ENCODE measurements at regions of chr2 and their contacts with region 1.

Region 1: GRCh38 chr2:174593574-174594203 is 3.9 kb downstream of the WIPF1 start:
- DNase-seq: peak; percentile 69
- H3K4me3 Mint-ChIP-seq: peak overlapping the region; percentile 86
- H3K27ac Mint-ChIP-seq: peak overlapping the region; percentile 98
- H3K4me1 Mint-ChIP-seq: peaks cover 58% of the 10 kb centered on the region
- H3K27me3 Mint-ChIP-seq: no peaks in the 10 kb centered on the region

Region 2: DNA sequence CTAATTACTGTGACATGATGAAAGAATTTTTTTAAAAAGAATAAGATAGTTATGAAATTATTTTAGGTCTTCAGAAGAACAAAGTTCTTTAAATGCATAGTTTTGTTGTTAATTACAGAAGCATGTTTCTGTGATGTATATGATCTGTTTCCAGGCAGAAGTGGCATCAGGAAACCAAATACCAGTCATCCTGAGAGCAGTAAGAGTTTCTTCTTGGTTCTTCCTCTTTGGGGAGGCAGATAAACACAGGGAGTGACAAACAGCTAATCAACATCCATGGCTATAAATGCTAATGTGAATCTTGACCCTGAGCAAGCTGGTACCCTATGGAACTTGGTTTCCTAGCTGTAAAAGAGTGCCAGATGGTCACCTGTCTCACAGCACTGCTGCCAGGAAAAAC is 25.3 kb before region 1 on chr2:
- intact Hi-C with region 1: loop called (anchors 2 kb)
- DNase-seq: no peak
- H3K4me3 Mint-ChIP-seq: no peak overlapping the region
- H3K27ac Mint-ChIP-seq: peak overlapping the region; percentile 45
- H3K4me1 Mint-ChIP-seq: peaks cover 62% of the 10 kb centered on the region
- H3K27me3 Mint-ChIP-seq: no peaks in the 10 kb centered on the region

Region 3: GRCh38 chr2:174577967-174578589 is 15.6 kb before region 1 on chr2:
- intact Hi-C with region 1: loop called (anchors 1 kb)
- DNase-seq: no peak
- H3K4me3 Mint-ChIP-seq: no peak overlapping the region
- H3K27ac Mint-ChIP-seq: no peak overlapping the region
- H3K4me1 Mint-ChIP-seq: peaks cover 60% of the 10 kb centered on the region
- H3K27me3 Mint-ChIP-seq: no peaks in the 10 kb centered on the region

Region 4: GRCh38 chr2:174615871-174616436 is 22.3 kb after region 1 on chr2:
- intact Hi-C with region 1: loop called (anchors 1 kb)
- DNase-seq: no peak
- H3K4me3 Mint-ChIP-seq: peak overlapping the region; percentile 60
- H3K27ac Mint-ChIP-seq: peak overlapping the region; percentile 94
- H3K4me1 Mint-ChIP-seq: peaks cover 92% of the 10 kb centered on the region
- H3K27me3 Mint-ChIP-seq: no peaks in the 10 kb centered on the region

Region 5: DNA sequence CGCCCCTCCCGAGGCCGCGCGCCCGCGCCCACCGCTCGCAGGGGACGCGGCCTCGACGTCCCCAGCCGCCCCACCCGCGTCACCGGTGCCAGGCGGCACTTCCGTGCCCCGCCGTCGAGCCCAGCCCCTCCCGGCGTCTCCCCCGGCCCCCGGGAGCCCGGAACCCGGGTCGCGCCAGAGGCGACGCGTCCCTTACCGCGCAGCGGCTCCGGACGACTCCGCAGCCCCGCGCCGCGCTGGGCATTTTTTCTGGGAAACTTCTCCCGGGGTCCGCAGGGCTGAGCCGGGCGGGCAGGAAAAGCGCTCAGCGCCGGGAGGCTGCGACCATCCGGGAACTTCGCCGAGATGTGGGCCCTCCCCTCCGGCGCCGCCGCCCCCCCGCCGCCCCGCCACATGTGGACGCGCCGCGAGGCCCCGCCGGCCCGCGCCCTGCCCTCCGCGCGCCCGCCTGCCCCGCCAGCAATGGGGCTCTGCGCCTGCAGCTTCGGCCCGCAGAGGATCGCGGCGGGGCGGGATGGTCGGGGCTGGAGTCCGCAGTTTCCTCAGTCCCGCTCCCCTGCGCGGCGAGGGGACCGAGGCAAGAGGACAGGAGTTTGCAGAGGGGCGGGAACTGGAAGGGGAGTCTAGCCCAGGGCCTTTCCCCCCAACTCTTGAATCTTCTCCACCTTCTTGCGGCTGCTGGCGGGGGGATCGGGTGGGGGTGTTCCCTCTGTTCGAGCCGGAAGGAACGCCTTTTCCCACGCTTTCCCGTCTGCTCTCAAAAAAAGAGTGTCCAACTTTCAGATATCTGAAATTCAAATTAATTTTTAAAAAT is 89.1 kb after region 1 on chr2:
- intact Hi-C with region 1: loop called (anchors 1 kb)
- DNase-seq: peak; percentile 57
- H3K4me3 Mint-ChIP-seq: peak overlapping the region; percentile 96
- H3K27ac Mint-ChIP-seq: peak overlapping the region; percentile 95
- H3K4me1 Mint-ChIP-seq: peaks cover 74% of the 10 kb centered on the region
- H3K27me3 Mint-ChIP-seq: no peaks in the 10 kb centered on the region

Region 6: GRCh38 chr2:174717273-174717672 is 123.6 kb after region 1 on chr2:
- intact Hi-C with region 1: no loop called
- DNase-seq: peak; percentile 17
- H3K4me3 Mint-ChIP-seq: peak overlapping the region; percentile 37
- H3K27ac Mint-ChIP-seq: no peak overlapping the region
- H3K4me1 Mint-ChIP-seq: peaks cover 38% of the 10 kb centered on the region
- H3K27me3 Mint-ChIP-seq: peaks cover 16% of the 10 kb centered on the region

Region 7: DNA sequence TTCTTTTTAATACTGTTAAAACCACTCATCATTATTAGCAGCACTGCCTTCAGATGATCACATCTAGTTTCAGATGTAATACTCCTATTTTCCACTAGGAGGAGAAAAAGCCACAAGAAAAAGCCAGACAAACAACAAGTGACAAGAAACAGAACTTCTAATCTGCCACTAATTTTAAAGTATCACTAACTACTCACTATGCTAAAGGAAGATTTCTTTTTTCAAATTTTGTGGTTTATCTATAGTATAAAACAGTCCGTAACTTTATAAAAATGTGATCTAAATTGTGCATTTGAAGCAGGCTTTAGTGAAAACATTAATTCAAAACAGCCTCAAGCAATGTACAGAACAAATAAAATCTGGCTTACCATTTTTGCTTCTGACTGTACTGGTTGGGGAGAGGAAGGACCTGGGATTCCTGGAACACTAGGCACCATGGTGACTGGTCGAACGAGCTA is 517.5 kb after region 1 on chr2:
- intact Hi-C with region 1: no loop called
- DNase-seq: no peak
- H3K4me3 Mint-ChIP-seq: no peak overlapping the region
- H3K27ac Mint-ChIP-seq: peak overlapping the region; percentile 31
- H3K4me1 Mint-ChIP-seq: peaks cover 4% of the 10 kb centered on the region
- H3K27me3 Mint-ChIP-seq: no peaks in the 10 kb centered on the region

Region 8: DNA sequence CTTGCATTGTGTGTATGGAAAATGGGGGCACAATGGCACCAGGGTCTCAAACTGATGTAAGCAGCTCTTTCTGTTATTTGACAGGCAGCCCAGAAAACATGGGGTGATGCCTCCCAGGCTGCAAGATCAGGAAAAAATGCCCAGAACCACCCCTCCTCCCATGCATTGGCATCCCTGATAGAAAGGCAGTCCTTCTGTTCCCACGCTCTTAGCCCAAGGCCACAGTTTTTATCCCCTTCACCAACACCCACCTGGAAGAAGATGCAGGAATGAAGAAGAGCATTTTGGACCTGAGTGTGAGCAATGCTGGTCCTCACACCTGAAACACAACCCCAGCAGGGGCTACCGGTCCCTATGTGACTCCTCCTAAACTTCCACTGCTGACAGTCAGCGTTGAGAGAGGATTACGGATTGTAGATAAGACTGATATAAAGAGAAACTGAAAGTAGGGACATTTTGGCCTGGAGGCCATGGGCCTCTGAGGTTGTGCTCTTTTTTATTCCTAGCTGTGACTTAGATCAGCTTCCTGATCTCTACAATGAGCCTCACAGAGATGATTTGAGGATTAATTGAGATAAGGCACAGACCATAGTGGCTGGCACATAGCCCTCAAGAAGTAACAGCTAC is 973.9 kb after region 1 on chr2:
- intact Hi-C with region 1: no loop called
- DNase-seq: no peak
- H3K4me3 Mint-ChIP-seq: no peak overlapping the region
- H3K27ac Mint-ChIP-seq: no peak overlapping the region
- H3K4me1 Mint-ChIP-seq: no peaks in the 10 kb centered on the region
- H3K27me3 Mint-ChIP-seq: peaks cover 9% of the 10 kb centered on the region